HEK293 (cell line): ENCODE measurements at regions of chr2 and their contacts with region 1.

Region 1: DNA sequence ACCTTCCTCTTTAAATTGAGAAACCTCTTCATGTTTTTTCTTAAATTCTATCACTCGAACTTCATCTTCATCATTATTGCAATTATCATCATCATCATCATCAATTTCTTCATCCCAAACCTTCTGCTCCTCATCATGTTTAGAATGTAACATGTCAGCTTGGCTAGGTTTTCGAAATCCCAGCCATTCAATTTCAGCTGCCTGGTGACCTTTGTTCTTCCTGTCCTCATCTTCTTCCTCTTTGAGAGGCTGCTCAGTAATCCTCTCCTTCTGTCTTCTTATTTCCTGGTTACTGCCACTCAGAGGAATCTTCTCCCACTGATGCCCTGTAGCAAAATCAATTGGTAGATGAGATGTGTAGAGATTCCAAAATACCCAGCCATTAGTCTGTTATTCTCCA is 4.2 kb downstream of the ERMN start:
- H3K4me3 ChIP-seq: no peak overlapping the region
- H3K27ac ChIP-seq: no peak overlapping the region
- H3K4me1 ChIP-seq: no peaks in the 10 kb centered on the region
- CTCF ChIP-seq: no peak

Region 2: DNA sequence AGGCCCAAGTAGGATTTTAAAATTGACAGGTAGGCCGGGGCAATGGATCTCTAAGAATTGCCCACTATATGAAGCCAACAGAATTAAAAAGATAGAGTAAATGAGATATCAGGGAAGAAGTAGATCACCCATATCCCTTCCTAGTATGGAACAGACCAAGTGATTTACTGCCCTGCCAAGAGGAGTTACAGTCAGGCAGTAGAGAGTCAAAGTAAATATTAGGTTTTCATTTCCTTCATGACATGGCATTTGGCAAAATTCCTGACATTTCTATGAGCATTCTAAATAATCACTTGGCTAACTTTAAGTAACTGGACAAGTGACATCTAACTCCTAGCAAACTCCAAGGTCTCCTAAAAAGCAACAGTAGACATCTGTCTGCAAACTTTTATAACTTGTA is 30.5 kb before region 1 on chr2:
- CTCF ChIA-PET with region 1: no interaction called
- POLR2A ChIA-PET with region 1: no interaction called
- H3K4me3 ChIP-seq: no peak overlapping the region
- H3K27ac ChIP-seq: no peak overlapping the region
- H3K4me1 ChIP-seq: no peaks in the 10 kb centered on the region
- CTCF ChIP-seq: no peak

Region 3: DNA sequence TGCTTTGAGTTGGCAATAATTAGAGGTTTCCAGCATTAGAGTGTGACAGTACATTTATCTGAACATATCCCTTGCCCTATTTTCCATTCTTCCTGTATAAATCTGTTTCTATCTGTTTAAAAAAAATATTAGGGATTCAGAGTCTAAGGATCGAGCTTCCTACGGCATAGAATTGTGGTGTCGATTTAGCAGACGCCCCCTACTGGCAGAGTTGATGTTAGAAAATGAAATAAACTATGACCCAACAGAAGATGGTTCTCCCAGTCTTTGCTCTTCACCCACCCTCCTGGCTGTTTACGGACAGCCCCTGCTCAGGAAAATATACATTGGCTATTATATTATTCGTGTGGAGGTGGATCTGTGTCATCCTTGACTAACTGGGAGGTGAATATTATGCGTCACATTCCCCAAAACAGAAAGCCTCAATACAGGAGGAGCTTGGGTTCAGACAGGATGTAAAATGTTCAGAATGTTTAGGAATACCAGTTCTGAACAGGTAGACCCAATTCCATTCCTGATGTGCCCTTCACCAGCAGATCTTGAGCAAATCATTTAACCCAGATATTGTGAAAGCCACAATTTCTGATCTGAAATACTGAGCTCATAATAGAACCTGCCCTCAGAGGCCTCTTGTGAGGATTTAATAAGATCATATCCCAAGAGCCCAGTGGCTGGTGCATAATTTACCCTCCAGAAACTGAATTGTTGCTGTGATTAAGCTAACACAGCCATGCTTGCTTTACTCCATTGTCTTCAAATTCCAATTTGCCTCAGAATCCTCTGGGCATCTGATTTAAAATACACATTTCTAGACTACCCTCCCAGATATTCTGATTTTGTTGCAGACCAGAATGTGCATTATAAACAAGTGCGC is 14.9 kb after region 1 on chr2:
- CTCF ChIA-PET with region 1: interaction called, 100 read pairs
- POLR2A ChIA-PET with region 1: no interaction called
- H3K4me3 ChIP-seq: no peak overlapping the region
- H3K27ac ChIP-seq: no peak overlapping the region
- H3K4me1 ChIP-seq: no peaks in the 10 kb centered on the region
- CTCF ChIP-seq: no peak